Activated naive CD4-positive, alpha-beta T cell treated with anti-CD3 and anti-CD28 coated beads for 36 hours (primary cell): ENCODE measurements at regions of chr3 and their contacts with region 1.

Region 1: GRCh38 chr3:149958171-149958796 is 12.4 kb downstream of the PFN2 start:
- DNase-seq: peak; percentile 17
- H3K4me3 Mint-ChIP-seq: no peak overlapping the region
- H3K27ac Mint-ChIP-seq: peak overlapping the region; percentile 6
- H3K4me1 Mint-ChIP-seq: peaks cover 16% of the 10 kb centered on the region
- H3K27me3 Mint-ChIP-seq: no peaks in the 10 kb centered on the region

Region 2: DNA sequence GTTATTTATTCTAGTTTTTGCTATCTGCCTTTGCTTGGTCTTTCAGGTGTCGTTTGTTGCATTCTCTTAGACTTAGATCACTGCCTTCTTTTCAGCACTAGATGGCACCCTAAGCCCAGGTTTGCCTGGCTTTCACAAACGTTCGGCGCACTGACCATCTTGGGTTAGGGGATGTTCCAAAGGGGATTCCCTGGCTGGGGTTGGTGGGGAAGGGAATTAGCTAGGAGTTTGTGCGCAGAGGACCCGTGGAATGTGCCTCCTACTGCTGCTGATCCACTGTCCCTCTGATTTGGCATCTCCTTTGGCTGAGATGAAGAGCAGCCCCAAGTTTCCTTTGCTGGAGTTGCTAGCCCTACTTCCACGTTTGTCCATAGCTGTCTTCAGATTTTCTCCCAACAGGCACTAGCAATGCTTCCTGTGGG is 21.5 kb before region 1 on chr3:
- CTCF ChIA-PET with region 1: interaction called, 12 read pairs
- intact Hi-C with region 1: no loop called
- DNase-seq: peak; percentile 53
- H3K4me3 Mint-ChIP-seq: no peak overlapping the region
- H3K27ac Mint-ChIP-seq: no peak overlapping the region
- H3K4me1 Mint-ChIP-seq: peaks cover 6% of the 10 kb centered on the region
- H3K27me3 Mint-ChIP-seq: no peaks in the 10 kb centered on the region